WTC11 (cell line): ENCODE measurements at regions of chr6 and their contacts with region 1.

Region 1: GRCh38 chr6:155248008-155249001 is 15.5 kb upstream of the CLDN20 start:
- DNase-seq: peak; percentile 60
- ATAC-seq: peak; percentile 74
- H3K4me3 Mint-ChIP-seq: no peak overlapping the region
- H3K27ac Mint-ChIP-seq: peak overlapping the region; percentile 84
- H3K4me1 Mint-ChIP-seq: peaks cover 12% of the 10 kb centered on the region
- H3K27me3 Mint-ChIP-seq: no peaks in the 10 kb centered on the region
- CTCF ChIP-seq: peak; percentile 39

Region 2: DNA sequence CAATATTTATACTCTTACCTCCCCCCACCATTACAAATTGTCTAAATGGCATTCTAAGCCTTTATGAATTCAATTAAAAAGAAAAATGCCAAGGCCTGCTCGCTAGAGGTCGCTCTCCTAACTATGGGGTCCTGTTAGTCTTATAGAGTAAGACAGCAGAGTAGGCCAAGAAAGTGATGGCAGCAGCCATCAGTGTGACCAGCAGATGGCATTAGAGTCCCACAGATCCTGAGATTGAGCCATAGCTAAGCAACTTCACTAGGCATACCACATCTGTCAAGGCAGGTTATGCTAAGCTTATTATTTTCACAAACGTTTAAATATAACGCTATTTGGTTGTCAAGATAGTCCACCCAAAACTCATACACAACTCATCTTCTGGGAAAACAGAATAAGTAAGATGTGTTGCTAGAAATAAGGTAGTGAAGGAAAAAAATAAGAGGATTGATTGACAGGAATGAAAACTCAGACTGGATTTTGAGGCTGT is 572.7 kb before region 1 on chr6:
- CTCF ChIA-PET with region 1: interaction called, 14 read pairs
- POLR2A ChIA-PET with region 1: no interaction called
- DNase-seq: peak; percentile 86
- ATAC-seq: peak; percentile 98
- H3K4me3 Mint-ChIP-seq: no peak overlapping the region
- H3K27ac Mint-ChIP-seq: no peak overlapping the region
- H3K4me1 Mint-ChIP-seq: no peaks in the 10 kb centered on the region
- H3K27me3 Mint-ChIP-seq: no peaks in the 10 kb centered on the region
- CTCF ChIP-seq: peak; percentile 89

Region 3: GRCh38 chr6:154916857-154917256 is 331.4 kb before region 1 on chr6:
- CTCF ChIA-PET with region 1: no interaction called
- POLR2A ChIA-PET with region 1: no interaction called
- DNase-seq: no peak
- ATAC-seq: no peak
- H3K4me3 Mint-ChIP-seq: no peak overlapping the region
- H3K27ac Mint-ChIP-seq: no peak overlapping the region
- H3K4me1 Mint-ChIP-seq: peaks cover 2% of the 10 kb centered on the region
- H3K27me3 Mint-ChIP-seq: no peaks in the 10 kb centered on the region
- CTCF ChIP-seq: no peak

Region 4: GRCh38 chr6:154928325-154928922 is 319.9 kb before region 1 on chr6:
- CTCF ChIA-PET with region 1: interaction called, 28 read pairs
- POLR2A ChIA-PET with region 1: no interaction called
- DNase-seq: peak; percentile 66
- ATAC-seq: peak; percentile 55
- H3K4me3 Mint-ChIP-seq: no peak overlapping the region
- H3K27ac Mint-ChIP-seq: no peak overlapping the region
- H3K4me1 Mint-ChIP-seq: peaks cover 30% of the 10 kb centered on the region
- H3K27me3 Mint-ChIP-seq: no peaks in the 10 kb centered on the region
- CTCF ChIP-seq: peak; percentile 72; the same call in 1 of the 2 replicates

Region 5: GRCh38 chr6:155185544-155185943 is 62.8 kb before region 1 on chr6:
- CTCF ChIA-PET with region 1: interaction called, 12 read pairs
- POLR2A ChIA-PET with region 1: no interaction called
- DNase-seq: peak; percentile 60
- ATAC-seq: peak; percentile 91
- H3K4me3 Mint-ChIP-seq: peak overlapping the region; percentile 36
- H3K27ac Mint-ChIP-seq: peak overlapping the region; percentile 90
- H3K4me1 Mint-ChIP-seq: peaks cover 33% of the 10 kb centered on the region
- H3K27me3 Mint-ChIP-seq: no peaks in the 10 kb centered on the region
- CTCF ChIP-seq: no peak

Region 6: GRCh38 chr6:155235087-155235486 is 13.2 kb before region 1 on chr6:
- CTCF ChIA-PET with region 1: interaction called, 24 read pairs
- POLR2A ChIA-PET with region 1: no interaction called
- DNase-seq: no peak
- ATAC-seq: no peak
- H3K4me3 Mint-ChIP-seq: no peak overlapping the region
- H3K27ac Mint-ChIP-seq: no peak overlapping the region
- H3K4me1 Mint-ChIP-seq: peaks cover 7% of the 10 kb centered on the region
- H3K27me3 Mint-ChIP-seq: peaks cover 3% of the 10 kb centered on the region; the same call in 1 of the 2 replicates
- CTCF ChIP-seq: no peak

Region 7: GRCh38 chr6:155399062-155399744 is 150.9 kb after region 1 on chr6:
- CTCF ChIA-PET with region 1: no interaction called
- POLR2A ChIA-PET with region 1: no interaction called
- DNase-seq: no peak
- ATAC-seq: no peak
- H3K4me3 Mint-ChIP-seq: no peak overlapping the region
- H3K27ac Mint-ChIP-seq: no peak overlapping the region
- H3K4me1 Mint-ChIP-seq: peaks cover 2% of the 10 kb centered on the region
- H3K27me3 Mint-ChIP-seq: no peaks in the 10 kb centered on the region
- CTCF ChIP-seq: no peak